Activated CD8-positive, alpha-beta T cell treated with anti-CD3 and anti-CD28 coated beads for 36 hours (primary cell): ENCODE measurements at regions of chr2 and their contacts with region 1.

Region 1: DNA sequence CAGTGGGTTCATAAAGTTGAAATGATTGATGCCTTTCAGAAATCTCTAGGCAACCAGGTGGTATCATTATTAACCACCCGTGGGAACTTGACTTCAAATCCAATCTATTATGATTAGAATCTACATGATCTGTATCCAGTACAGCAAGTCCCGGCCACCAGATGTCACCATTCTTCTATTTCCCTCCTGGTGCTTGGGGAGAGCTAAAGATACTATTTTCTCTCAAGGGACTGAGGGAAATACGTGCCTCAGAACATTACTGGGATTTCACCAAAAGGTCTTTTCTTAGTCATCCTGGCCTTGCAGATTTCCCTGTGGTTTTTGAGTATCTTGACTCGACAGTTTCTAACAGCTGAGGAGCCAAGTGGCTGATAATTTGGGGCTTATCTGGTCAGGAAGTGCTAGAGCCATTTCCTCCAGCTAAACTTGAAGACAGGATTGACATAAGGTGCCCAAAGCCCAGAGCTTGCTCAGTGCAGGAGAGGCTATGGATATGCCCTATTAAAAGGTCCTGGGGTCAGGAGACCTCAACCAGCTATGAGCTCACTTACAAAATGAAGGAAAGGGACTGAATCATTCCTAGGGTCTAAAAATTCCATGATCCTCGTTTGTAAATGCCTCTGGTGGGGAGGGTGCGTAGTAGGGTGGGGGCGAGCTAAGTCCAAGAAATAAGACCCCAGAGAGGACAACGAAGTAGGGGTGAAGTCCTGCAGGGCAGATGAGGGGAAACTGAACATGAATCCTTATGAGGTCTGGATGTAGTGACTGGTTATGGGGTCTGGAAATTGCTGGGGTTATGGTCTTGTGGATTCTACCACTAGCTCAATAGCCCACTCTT is 135.4 kb upstream of the MGAT5 start:
- DNase-seq: peak; percentile 97
- ATAC-seq: peak; percentile 61
- H3K4me3 Mint-ChIP-seq: peak overlapping the region; percentile 94
- H3K27ac Mint-ChIP-seq: no peak overlapping the region
- H3K4me1 Mint-ChIP-seq: peaks cover 32% of the 10 kb centered on the region
- H3K27me3 Mint-ChIP-seq: peaks cover 2% of the 10 kb centered on the region
- CTCF ChIP-seq: peak; percentile 75

Region 2: GRCh38 chr2:133600266-133600950 is 518.1 kb before region 1 on chr2:
- CTCF ChIA-PET with region 1: no interaction called
- POLR2A ChIA-PET with region 1: no interaction called
- intact Hi-C with region 1: no loop called
- DNase-seq: no peak
- ATAC-seq: no peak
- H3K4me3 Mint-ChIP-seq: no peak overlapping the region
- H3K27ac Mint-ChIP-seq: no peak overlapping the region
- H3K4me1 Mint-ChIP-seq: no peaks in the 10 kb centered on the region
- H3K27me3 Mint-ChIP-seq: no peaks in the 10 kb centered on the region
- CTCF ChIP-seq: no peak

Region 3: GRCh38 chr2:134173338-134174016 is 55.0 kb after region 1 on chr2:
- CTCF ChIA-PET with region 1: interaction called, 8 read pairs
- POLR2A ChIA-PET with region 1: interaction called, 3 read pairs
- intact Hi-C with region 1: loop called (anchors 2 kb)
- DNase-seq: no peak
- ATAC-seq: no peak
- H3K4me3 Mint-ChIP-seq: no peak overlapping the region
- H3K27ac Mint-ChIP-seq: no peak overlapping the region
- H3K4me1 Mint-ChIP-seq: peaks cover 61% of the 10 kb centered on the region
- H3K27me3 Mint-ChIP-seq: no peaks in the 10 kb centered on the region
- CTCF ChIP-seq: no peak

Region 4: DNA sequence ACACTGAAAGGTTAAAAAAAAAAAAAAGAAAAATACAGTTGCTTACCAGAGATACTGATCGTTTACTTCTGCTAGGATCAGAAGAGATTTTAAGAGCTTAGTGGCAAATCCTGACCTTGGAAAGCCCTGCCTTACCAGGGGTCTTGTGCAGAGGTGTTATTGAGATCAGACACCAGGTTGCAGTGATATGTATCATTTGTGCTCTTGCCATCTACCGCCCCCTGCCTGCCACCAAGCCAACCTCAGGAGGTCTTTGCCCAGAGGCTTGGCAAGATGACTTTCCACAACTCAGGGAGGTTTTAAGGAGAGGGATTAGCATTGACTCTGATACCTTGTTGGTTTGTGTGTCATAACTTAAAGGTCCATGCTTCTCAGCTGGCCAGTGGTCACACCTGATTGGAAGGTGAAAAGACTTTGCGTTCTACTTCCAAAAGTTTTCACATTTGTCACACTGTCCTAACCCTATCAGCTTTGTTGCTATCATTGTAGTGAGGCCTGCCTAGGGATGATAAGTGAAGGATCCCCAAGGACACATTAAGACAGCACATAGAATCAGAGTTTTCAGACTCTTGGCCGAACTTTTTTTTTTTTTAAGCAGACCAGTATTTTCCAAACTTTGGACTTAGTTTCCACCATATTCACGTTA is 89.2 kb after region 1 on chr2:
- CTCF ChIA-PET with region 1: interaction called, 95 read pairs
- POLR2A ChIA-PET with region 1: interaction called, 5 read pairs
- intact Hi-C with region 1: loop called (anchors 5 kb)
- DNase-seq: peak; percentile 80
- ATAC-seq: peak; percentile 92
- H3K4me3 Mint-ChIP-seq: no peak overlapping the region
- H3K27ac Mint-ChIP-seq: no peak overlapping the region
- H3K4me1 Mint-ChIP-seq: peaks cover 6% of the 10 kb centered on the region
- H3K27me3 Mint-ChIP-seq: no peaks in the 10 kb centered on the region
- CTCF ChIP-seq: peak; percentile 64

Region 5: DNA sequence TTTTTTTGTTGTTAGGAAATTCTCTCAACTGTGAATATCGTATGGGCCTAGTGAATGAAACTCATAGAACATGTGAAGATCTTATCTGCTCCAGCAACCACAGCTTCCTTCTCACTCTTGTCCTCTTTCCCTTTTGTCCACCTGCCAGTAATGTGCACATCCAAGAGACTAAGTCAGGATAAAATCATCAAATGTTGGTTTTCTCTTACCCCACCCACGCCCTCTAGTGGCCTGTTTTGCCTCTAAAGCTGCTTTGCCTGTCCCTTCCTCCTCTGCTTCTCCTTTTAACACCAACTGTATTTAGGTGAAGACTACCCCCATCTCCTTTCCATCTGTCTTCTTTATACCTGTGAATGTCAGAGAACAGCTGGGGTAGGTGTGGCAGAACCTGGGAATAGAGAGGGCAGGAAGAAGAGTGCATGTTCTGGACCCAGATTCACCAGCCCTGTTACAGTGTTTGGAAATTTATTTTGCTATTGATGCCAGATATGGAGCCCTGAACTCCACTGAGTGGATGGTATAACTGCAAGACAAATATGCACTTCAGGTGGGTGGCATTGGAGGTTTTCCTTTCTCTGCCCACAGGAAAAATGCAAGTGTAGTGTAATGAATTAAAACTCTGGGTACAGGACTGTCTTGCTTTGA is 127.0 kb after region 1 on chr2:
- CTCF ChIA-PET with region 1: interaction called, 50 read pairs
- POLR2A ChIA-PET with region 1: interaction called, 6 read pairs
- intact Hi-C with region 1: loop called (anchors 2 kb)
- DNase-seq: peak; percentile 90
- ATAC-seq: peak; percentile 40
- H3K4me3 Mint-ChIP-seq: no peak overlapping the region
- H3K27ac Mint-ChIP-seq: peak overlapping the region; percentile 13
- H3K4me1 Mint-ChIP-seq: peaks cover 79% of the 10 kb centered on the region
- H3K27me3 Mint-ChIP-seq: no peaks in the 10 kb centered on the region
- CTCF ChIP-seq: peak; percentile 88

Region 6: GRCh38 chr2:134454931-134455330 is 336.4 kb after region 1 on chr2:
- CTCF ChIA-PET with region 1: interaction called, 18 read pairs
- POLR2A ChIA-PET with region 1: no interaction called
- intact Hi-C with region 1: no loop called
- DNase-seq: no peak
- ATAC-seq: no peak
- H3K4me3 Mint-ChIP-seq: no peak overlapping the region
- H3K27ac Mint-ChIP-seq: no peak overlapping the region
- H3K4me1 Mint-ChIP-seq: no peaks in the 10 kb centered on the region
- H3K27me3 Mint-ChIP-seq: no peaks in the 10 kb centered on the region
- CTCF ChIP-seq: no peak